CD4-positive, alpha-beta memory T cell (primary cell): ENCODE measurements at regions of chr2 and their contacts with region 1.

Region 1: GRCh38 chr2:204475399-204475798 is 69.9 kb upstream of the PARD3B start:
- DNase-seq: no peak
- H3K4me3 ChIP-seq: no peak overlapping the region
- H3K4me3 Mint-ChIP-seq: no peak overlapping the region
- H3K27ac ChIP-seq: no peak overlapping the region
- H3K27ac Mint-ChIP-seq: no peak overlapping the region
- H3K4me1 ChIP-seq: no peaks in the 10 kb centered on the region
- H3K4me1 Mint-ChIP-seq: no peaks in the 10 kb centered on the region
- H3K27me3 ChIP-seq: no peaks in the 10 kb centered on the region
- H3K27me3 Mint-ChIP-seq: peaks cover 4 to 7% of the 10 kb centered on the region in 2 donors

Region 2: GRCh38 chr2:204452464-204453023 is 22.9 kb before region 1 on chr2:
- CTCF ChIA-PET with region 1: no interaction called
- POLR2A ChIA-PET with region 1: no interaction called
- intact Hi-C with region 1: loop called (anchors 1 kb)
- DNase-seq: no peak
- H3K4me3 ChIP-seq: no peak overlapping the region
- H3K4me3 Mint-ChIP-seq: no peak overlapping the region
- H3K27ac ChIP-seq: no peak overlapping the region
- H3K27ac Mint-ChIP-seq: no peak overlapping the region
- H3K4me1 ChIP-seq: no peaks in the 10 kb centered on the region
- H3K4me1 Mint-ChIP-seq: peaks cover 0 to 1% (median 0%) of the 10 kb centered on the region in 4 donors
- H3K27me3 ChIP-seq: no peaks in the 10 kb centered on the region
- H3K27me3 Mint-ChIP-seq: peaks cover 0 to 4% of the 10 kb centered on the region in 2 donors

Region 3: GRCh38 chr2:204691911-204692510 is 216.6 kb after region 1 on chr2:
- CTCF ChIA-PET with region 1: no interaction called
- POLR2A ChIA-PET with region 1: no interaction called
- intact Hi-C with region 1: no loop called
- DNase-seq: peak in 3 of 5 donors; percentile 13 to 24 (median 20)
- H3K4me3 ChIP-seq: no peak overlapping the region
- H3K4me3 Mint-ChIP-seq: no peak overlapping the region
- H3K27ac ChIP-seq: no peak overlapping the region
- H3K27ac Mint-ChIP-seq: no peak overlapping the region
- H3K4me1 ChIP-seq: no peaks in the 10 kb centered on the region
- H3K4me1 Mint-ChIP-seq: peaks cover 0 to 11% (median 8%) of the 10 kb centered on the region in 4 donors
- H3K27me3 ChIP-seq: no peaks in the 10 kb centered on the region
- H3K27me3 Mint-ChIP-seq: peaks cover 0 to 1% of the 10 kb centered on the region in 2 donors